ENCODE measurements at regions of chr9 and their contacts with region 1.

Region 1: DNA sequence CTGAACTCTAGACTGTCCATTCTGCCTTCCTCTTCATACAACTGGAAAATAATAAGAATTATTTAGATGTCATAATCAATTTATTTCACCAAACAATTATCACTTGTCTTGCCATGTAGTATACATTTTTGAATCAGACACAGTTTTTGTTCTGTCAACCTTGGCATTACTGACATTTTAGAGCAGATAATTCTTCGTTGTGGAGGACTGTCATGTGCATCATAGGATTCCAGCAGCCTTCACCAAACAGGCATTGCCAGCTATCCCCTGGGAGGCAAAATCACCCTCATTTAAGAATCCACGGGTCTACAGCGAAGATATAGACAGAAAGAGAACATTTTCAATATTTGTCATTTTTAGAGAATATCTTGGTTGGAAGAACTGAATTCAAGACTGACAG is 293.9 kb downstream of the KDM4C start:
- DNase-seq: no peak
- H3K4me3 ChIP-seq: no peak overlapping the region
- H3K27me3 ChIP-seq: no peaks in the 10 kb centered on the region
- CTCF ChIP-seq: no peak

Region 2: DNA sequence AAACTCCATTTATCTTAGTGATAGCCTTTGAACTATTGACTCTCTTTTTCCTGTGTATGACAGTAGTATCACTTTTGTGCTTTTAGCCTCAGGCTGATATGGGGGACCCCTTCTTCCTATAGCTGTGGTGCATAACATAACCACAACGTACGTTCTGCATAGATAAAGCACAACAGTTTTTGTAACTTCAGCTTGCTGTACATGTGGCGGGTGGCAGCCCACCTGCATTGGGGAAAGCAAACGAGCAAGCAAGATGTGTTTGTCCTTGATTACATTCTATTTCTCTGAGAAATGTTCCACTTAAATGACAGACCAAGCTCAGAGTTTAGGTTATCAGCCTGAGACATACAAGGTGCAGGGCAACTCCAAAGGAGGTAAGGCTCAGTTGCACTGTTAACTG is 15.5 kb after region 1 on chr9:
- CTCF ChIA-PET with region 1: interaction called, 12 read pairs
- POLR2A ChIA-PET with region 1: no interaction called
- DNase-seq: no peak
- H3K4me3 ChIP-seq: no peak overlapping the region
- H3K27me3 ChIP-seq: no peaks in the 10 kb centered on the region
- CTCF ChIP-seq: no peak

Measured in BJ (cell line).